ENCODE measurements at regions of chr12 and their contacts with region 1.

Region 1: GRCh38 chr12:39619660-39620433 is at the start of gene ABCD2:
- DNase-seq: peak; percentile 87
- H3K4me3 ChIP-seq: peak within 1 kb of the TSS; percentile 38 to 58 (median 56)
- H3K27ac ChIP-seq: peak within 1 kb of the TSS; percentile 75 to 88 (median 82)
- H3K4me1 ChIP-seq: peaks cover 0 to 41% (median 10%) of the 10 kb centered on the region in 4 donors
- H3K27me3 ChIP-seq: no peaks in the 10 kb centered on the region
- CTCF ChIP-seq: no peak
- EP300 ChIP-seq: peak in 1 of 4 donors; percentile 1
- POLR2A ChIP-seq: no peak
- total RNA-seq, gene ABCD2: 0.49 to 2.9 (median 0.62) TPM

Region 2: GRCh38 chr12:39443081-39443928 is 176.5 kb before region 1 on chr12 and contains the start of gene KIF21A:
- intact Hi-C with region 1: loop called (anchors 5 kb)
- DNase-seq: peak; percentile 92
- H3K4me3 ChIP-seq: peak within 1 kb of the TSS; percentile 61 to 85 (median 73)
- H3K27ac ChIP-seq: peak within 1 kb of the TSS; percentile 82 to 90 (median 84)
- H3K4me1 ChIP-seq: peaks cover 0 to 18% (median 10%) of the 10 kb centered on the region in 4 donors
- H3K27me3 ChIP-seq: no peaks in the 10 kb centered on the region
- CTCF ChIP-seq: peak; percentile 6 to 74 (median 20)
- EP300 ChIP-seq: no peak
- POLR2A ChIP-seq: peak in 1 of 2 donors; percentile 28
- total RNA-seq, gene KIF21A: 12.0 to 23.9 (median 17.3) TPM

Region 3: GRCh38 chr12:39646963-39647362 is 27.1 kb after region 1 on chr12:
- intact Hi-C with region 1: no loop called
- DNase-seq: no peak
- H3K4me3 ChIP-seq: no peak overlapping the region
- H3K27ac ChIP-seq: no peak overlapping the region
- H3K4me1 ChIP-seq: no peaks in the 10 kb centered on the region
- H3K27me3 ChIP-seq: no peaks in the 10 kb centered on the region
- CTCF ChIP-seq: no peak
- EP300 ChIP-seq: no peak
- POLR2A ChIP-seq: no peak

Region 4: GRCh38 chr12:40175045-40175444 is 555.2 kb after region 1 on chr12:
- intact Hi-C with region 1: no loop called
- DNase-seq: no peak
- H3K4me3 ChIP-seq: no peak overlapping the region
- H3K27ac ChIP-seq: no peak overlapping the region
- H3K4me1 ChIP-seq: no peaks in the 10 kb centered on the region
- H3K27me3 ChIP-seq: no peaks in the 10 kb centered on the region
- CTCF ChIP-seq: no peak
- EP300 ChIP-seq: no peak
- POLR2A ChIP-seq: no peak